ENCODE measurements at regions of chr12 and their contacts with region 1.

Region 1: GRCh38 chr12:29519585-29520182 is 22.2 kb upstream of the OVCH1 start:
- DNase-seq: no peak
- ATAC-seq: no peak

Region 2: GRCh38 chr12:28855761-28856310 is 663.8 kb before region 1 on chr12:
- intact Hi-C with region 1: no loop called
- DNase-seq: no peak
- ATAC-seq: no peak

Region 3: DNA sequence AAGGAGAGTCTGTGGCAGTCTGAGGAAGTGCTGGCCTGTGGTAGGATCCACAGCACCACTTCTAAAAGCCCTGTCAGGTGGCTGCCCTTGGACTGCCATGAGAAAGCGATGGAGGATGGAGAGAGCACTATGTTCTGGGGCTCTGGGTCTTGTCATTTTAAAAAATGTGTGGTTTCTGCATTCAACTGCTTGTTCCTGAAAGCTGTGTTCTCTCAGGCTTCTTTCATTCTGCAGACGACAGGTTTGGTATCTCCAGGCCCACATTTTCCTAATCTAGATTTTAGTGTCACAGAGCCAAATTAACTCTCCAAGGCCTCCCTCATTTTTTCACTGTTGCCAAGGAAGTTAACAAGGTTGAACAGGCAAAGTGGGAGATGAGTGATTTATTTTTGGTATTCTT is 32.7 kb before region 1 on chr12:
- intact Hi-C with region 1: no loop called
- DNase-seq: no peak
- ATAC-seq: no peak

Region 4: DNA sequence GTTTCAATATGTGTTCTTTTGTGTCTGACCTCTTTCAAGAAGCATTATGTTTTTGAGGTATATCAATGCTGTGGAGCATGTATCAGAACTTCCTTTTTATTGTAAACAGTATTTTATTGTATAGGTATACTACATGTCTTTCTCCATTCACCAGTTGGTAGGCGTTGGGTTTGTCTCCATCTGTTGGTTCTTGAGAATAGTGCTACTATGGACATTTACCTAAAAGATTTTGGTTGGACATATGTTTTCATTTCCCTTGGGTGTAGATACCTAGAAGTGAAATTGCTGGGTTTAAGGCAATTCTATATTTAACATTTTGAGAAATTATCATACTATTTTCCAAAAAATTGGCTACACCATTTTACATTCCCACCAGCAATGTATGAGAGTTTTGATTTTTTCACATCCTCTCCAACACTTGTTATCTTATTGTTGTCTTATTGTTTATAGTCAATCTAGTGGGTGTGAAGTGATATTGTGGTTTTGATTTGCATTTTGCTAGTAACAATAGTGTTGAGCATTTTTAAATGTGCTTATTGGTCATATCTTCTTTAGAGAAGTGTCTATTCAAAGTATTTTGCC is 766.8 kb after region 1 on chr12:
- intact Hi-C with region 1: loop called (anchors 10 kb)
- DNase-seq: no peak
- ATAC-seq: no peak

Region 5: DNA sequence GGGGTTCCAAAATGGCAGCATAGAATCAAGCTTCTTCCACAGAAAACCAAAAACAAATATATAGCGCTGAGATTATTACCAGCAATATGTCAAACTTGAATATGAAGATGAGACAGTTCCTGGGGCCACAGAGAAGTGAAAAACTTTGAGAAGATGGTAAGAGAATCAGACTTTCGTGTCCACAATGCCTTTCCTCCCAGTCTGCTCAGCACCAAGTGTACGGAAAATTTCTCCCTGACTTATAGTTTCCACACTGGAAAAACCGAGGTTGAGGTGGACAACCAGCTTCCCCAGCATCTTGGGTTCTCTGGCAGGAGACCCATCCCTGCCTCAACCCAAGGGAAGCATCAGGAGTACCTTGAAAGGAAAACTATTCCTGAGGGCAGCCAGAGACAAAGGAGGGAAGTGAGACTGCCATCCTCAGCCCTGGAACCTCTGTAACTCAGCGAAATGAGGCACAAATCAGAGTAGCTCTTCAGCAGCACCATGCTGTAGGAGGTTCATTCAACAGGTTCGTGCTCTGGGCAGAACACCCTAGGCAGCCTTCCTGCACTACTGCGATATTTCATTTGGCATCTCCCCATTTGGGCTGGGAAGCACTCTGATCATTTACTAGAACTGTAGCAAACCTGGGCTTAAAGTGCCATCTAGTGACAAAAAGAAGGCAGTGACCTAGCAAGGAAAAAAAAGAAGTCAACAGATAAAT is 1287.5 kb after region 1 on chr12:
- intact Hi-C with region 1: loop called (anchors 10 kb)
- DNase-seq: no peak
- ATAC-seq: peak; percentile 85